ENCODE measurements at regions of chr3 and their contacts with region 1.

Region 1: GRCh38 chr3:115147329-115148141 is 447 bp upstream of the ZBTB20 start:
- DNase-seq: peak; percentile 98
- ATAC-seq: peak; percentile 82
- H3K4me3 Mint-ChIP-seq: peak overlapping the region; percentile 87
- H3K27ac Mint-ChIP-seq: peak overlapping the region; percentile 97
- H3K4me1 Mint-ChIP-seq: peaks cover 23% of the 10 kb centered on the region
- H3K27me3 Mint-ChIP-seq: no peaks in the 10 kb centered on the region
- CTCF ChIP-seq: no peak

Region 2: GRCh38 chr3:114827495-114827894 is 320.0 kb before region 1 on chr3:
- CTCF ChIA-PET with region 1: no interaction called
- POLR2A ChIA-PET with region 1: no interaction called
- intact Hi-C with region 1: loop called (anchors 10 kb)
- DNase-seq: peak; percentile 23
- ATAC-seq: peak; percentile 70
- H3K4me3 Mint-ChIP-seq: no peak overlapping the region
- H3K27ac Mint-ChIP-seq: no peak overlapping the region
- H3K4me1 Mint-ChIP-seq: peaks cover 12% of the 10 kb centered on the region
- H3K27me3 Mint-ChIP-seq: no peaks in the 10 kb centered on the region
- CTCF ChIP-seq: peak; percentile 66

Region 3: DNA sequence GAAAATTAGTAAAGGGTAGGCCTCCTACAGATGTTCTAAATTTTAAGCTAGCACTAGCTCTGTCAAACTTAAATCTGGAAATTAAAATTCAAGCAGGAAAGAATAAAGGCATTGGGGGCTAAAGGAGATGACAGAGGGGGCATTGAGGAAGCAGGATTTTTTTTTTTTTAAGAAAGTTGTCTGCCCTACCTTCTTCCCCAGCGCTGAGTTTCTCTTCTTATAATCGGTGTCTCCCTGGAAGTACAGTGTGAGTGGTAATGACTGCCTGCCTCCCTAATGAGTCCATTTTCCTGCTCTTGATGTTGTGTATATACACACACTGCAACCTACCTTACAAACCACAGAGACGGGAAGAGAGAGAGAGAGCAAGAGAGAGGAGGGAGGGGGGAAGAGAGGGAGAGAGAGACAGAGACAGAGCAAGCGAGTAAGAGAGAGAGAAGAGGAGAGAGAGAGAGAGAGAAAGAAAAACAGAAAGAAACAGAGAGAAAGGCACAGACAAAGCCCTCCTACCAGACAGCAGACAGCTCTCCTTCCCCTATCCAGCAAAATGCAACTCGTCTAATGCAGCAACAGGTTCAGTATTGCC is 47.5 kb before region 1 on chr3:
- CTCF ChIA-PET with region 1: interaction called, 4 read pairs
- POLR2A ChIA-PET with region 1: interaction called, 3 read pairs
- intact Hi-C with region 1: loop called (anchors 5 kb)
- DNase-seq: peak; percentile 8
- ATAC-seq: peak; percentile 89
- H3K4me3 Mint-ChIP-seq: peak overlapping the region; percentile 72
- H3K27ac Mint-ChIP-seq: peak overlapping the region; percentile 79
- H3K4me1 Mint-ChIP-seq: peaks cover 44% of the 10 kb centered on the region
- H3K27me3 Mint-ChIP-seq: no peaks in the 10 kb centered on the region
- CTCF ChIP-seq: no peak

Region 4: GRCh38 chr3:115169808-115170207 is 22.3 kb after region 1 on chr3:
- CTCF ChIA-PET with region 1: interaction called, 6 read pairs
- POLR2A ChIA-PET with region 1: interaction called, 28 read pairs
- intact Hi-C with region 1: no loop called
- DNase-seq: no peak
- ATAC-seq: no peak
- H3K4me3 Mint-ChIP-seq: no peak overlapping the region
- H3K27ac Mint-ChIP-seq: no peak overlapping the region
- H3K4me1 Mint-ChIP-seq: peaks cover 11% of the 10 kb centered on the region
- H3K27me3 Mint-ChIP-seq: no peaks in the 10 kb centered on the region
- CTCF ChIP-seq: peak; percentile 20

Region 5: DNA sequence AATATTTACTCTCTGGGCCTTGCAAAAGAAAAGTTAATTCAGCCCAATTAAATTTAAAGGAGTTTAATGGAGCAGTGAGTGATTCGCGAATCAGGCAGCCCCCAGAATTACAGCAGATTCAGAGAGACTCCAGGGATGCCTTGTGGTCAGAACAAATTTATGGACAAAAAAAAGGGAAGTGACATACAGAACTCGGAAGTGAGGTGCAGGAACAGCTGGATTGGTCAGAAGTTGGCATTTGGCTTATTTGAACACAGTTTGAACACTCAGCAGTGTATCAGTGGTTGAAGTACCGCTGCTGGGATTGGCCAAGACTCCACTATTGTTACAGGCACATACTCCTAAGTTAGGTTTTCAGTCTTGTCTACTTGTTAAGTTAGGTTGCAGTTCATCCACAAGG is 330.8 kb after region 1 on chr3:
- CTCF ChIA-PET with region 1: no interaction called
- POLR2A ChIA-PET with region 1: no interaction called
- intact Hi-C with region 1: no loop called
- DNase-seq: no peak
- ATAC-seq: no peak
- H3K4me3 Mint-ChIP-seq: no peak overlapping the region
- H3K27ac Mint-ChIP-seq: no peak overlapping the region
- H3K4me1 Mint-ChIP-seq: no peaks in the 10 kb centered on the region
- H3K27me3 Mint-ChIP-seq: peaks cover 5% of the 10 kb centered on the region
- CTCF ChIP-seq: no peak

Region 6: DNA sequence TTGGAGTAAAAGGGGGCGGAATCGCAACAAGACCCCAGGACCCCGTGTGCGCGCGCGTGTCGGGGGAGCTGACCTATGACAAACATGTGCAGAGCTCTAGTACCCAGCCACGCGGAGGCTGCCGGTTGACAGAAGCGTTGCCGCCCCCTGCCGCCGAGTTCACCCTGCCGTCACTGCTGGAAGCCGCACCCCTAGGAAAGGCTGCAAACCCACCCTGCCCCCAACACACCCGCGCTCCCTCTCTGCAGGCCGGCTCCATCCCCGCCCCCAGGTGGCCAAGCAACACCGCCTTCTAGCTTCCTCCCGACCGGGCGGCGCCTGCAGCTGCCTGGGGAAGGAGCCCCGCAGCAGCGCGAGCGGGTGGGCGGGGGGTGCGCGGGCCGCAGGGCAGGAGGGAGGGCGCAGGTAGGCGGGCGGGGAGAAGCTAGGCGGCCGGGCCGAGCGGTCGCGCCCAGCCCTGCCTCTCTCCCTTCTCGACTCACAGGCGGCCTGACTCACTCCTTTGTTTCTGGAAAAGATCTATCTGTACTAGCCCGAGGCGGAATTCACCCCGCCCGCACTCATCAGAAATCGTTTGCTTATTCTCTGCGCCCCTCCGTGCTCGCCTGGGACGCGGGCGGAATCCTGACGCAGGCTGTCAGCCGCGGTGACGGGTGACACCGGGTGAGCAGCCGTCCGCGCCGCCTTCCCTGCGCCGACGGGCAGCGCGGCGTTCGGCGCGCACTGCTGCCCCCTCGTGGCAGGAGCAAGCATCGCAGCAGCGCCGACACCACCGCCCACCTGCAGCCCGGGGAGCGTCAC is 636.6 kb after region 1 on chr3:
- CTCF ChIA-PET with region 1: no interaction called
- POLR2A ChIA-PET with region 1: interaction called, 4 read pairs
- intact Hi-C with region 1: loop called (anchors 2 kb)
- DNase-seq: peak; percentile 96
- ATAC-seq: peak; percentile 87
- H3K4me3 Mint-ChIP-seq: peak overlapping the region; percentile 73
- H3K27ac Mint-ChIP-seq: peak overlapping the region; percentile 97
- H3K4me1 Mint-ChIP-seq: peaks cover 18% of the 10 kb centered on the region
- H3K27me3 Mint-ChIP-seq: no peaks in the 10 kb centered on the region
- CTCF ChIP-seq: peak; percentile 85

Measured in activated CD8-positive, alpha-beta T cell treated with anti-CD3 and anti-CD28 coated beads for 36 hours (primary cell).